Activated naive CD4-positive, alpha-beta T cell treated with anti-CD3 and anti-CD28 coated beads for 36 hours (primary cell): ENCODE measurements at regions of chr3 and their contacts with region 1.

Region 1: DNA sequence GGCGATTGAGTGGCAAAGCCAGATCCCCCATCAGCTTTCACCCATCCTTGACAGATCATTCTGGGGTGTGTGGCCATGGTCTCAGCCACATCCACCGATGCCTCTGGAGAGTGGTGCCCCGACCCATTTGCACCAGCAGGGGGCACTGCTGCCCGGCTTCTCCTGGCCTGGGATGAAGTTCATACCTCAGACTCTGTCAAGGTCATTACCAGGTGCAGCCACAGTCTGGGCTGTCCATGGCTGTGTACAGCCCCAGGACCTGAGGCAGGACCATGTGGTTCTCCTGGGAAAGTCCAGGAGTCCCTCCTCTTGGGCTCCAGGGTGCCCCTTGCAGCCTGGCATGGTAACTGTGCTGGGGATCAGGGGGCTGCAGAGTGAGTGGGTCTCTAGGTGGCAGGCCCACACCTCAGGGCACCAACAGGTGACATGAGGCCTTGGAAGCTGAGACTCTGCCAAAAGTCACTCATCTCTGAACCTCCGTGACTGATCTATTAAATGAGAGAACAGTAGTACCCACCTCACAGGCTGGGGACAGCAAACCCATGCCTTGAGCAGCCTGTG is 67.2 kb downstream of the CACNA2D2 start:
- DNase-seq: peak; percentile 85
- H3K4me3 Mint-ChIP-seq: no peak overlapping the region
- H3K27ac Mint-ChIP-seq: no peak overlapping the region
- H3K4me1 Mint-ChIP-seq: no peaks in the 10 kb centered on the region
- H3K27me3 Mint-ChIP-seq: peaks cover 2% of the 10 kb centered on the region

Region 2: DNA sequence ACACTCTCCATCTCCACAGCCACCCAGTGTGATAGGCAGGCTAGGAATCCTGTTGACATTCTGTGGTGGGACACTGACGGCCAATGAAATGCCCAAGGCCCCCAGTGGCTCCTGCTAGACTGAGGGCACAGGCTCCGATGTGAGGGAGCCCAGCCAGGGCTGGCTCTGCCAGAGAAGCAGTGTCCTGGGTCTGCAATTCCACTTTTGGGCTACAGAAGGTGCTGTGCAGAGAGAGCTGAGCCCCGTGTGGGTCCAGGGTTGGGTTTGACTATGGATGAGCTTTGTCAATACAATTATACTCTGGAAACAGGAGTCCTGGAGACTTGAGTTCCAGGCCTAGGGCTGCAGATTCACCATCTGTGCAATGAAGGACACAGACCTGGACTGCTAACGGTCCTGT is 21.1 kb before region 1 on chr3:
- CTCF ChIA-PET with region 1: no interaction called
- intact Hi-C with region 1: no loop called
- DNase-seq: no peak
- H3K4me3 Mint-ChIP-seq: no peak overlapping the region
- H3K27ac Mint-ChIP-seq: no peak overlapping the region
- H3K4me1 Mint-ChIP-seq: no peaks in the 10 kb centered on the region
- H3K27me3 Mint-ChIP-seq: no peaks in the 10 kb centered on the region

Region 3: GRCh38 chr3:50474717-50475116 is 38.5 kb after region 1 on chr3:
- CTCF ChIA-PET with region 1: no interaction called
- intact Hi-C with region 1: no loop called
- DNase-seq: no peak
- H3K4me3 Mint-ChIP-seq: no peak overlapping the region
- H3K27ac Mint-ChIP-seq: no peak overlapping the region
- H3K4me1 Mint-ChIP-seq: no peaks in the 10 kb centered on the region
- H3K27me3 Mint-ChIP-seq: no peaks in the 10 kb centered on the region

Region 4: DNA sequence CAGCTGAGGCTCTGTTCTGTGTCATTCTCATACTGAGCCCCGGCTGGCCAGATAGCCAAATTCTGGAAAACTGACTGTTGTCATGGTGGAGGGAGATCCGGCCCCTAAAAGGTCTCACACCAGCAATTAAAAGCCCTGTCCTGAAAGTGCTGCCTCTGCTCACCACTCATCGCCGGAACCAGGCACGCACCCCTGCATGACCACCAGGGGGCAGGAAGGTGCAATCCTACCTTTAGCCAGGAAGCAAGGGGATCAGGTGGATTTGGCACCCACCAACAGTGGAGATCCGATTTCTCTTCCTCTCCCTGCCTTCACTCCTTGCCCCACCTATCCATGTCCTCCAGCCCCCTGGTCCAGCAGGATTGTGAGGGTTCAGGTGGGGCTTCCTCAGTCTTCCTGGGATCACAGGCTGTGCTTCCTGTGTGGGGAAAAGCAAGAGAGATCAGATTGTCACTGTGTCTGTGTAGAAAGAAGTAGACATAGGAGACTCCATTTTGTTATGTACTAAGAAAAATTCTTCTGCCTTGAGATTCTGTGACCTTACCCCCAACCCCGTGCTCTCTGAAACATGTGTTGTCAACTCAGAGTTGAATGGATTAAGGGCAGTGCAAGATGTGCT is 83.4 kb after region 1 on chr3:
- CTCF ChIA-PET with region 1: no interaction called
- intact Hi-C with region 1: loop called (anchors 1 kb)
- DNase-seq: peak; percentile 86
- H3K4me3 Mint-ChIP-seq: no peak overlapping the region
- H3K27ac Mint-ChIP-seq: no peak overlapping the region
- H3K4me1 Mint-ChIP-seq: peaks cover 7% of the 10 kb centered on the region
- H3K27me3 Mint-ChIP-seq: no peaks in the 10 kb centered on the region

Region 5: GRCh38 chr3:50542177-50543034 is 106.2 kb after region 1 on chr3:
- CTCF ChIA-PET with region 1: interaction called, 25 read pairs
- intact Hi-C with region 1: loop called (anchors 1 kb)
- DNase-seq: peak; percentile 71
- H3K4me3 Mint-ChIP-seq: no peak overlapping the region
- H3K27ac Mint-ChIP-seq: no peak overlapping the region
- H3K4me1 Mint-ChIP-seq: no peaks in the 10 kb centered on the region
- H3K27me3 Mint-ChIP-seq: no peaks in the 10 kb centered on the region

Region 6: GRCh38 chr3:50550079-50550741 is 114.0 kb after region 1 on chr3:
- CTCF ChIA-PET with region 1: interaction called, 3 read pairs
- intact Hi-C with region 1: loop called (anchors 1 kb)
- DNase-seq: peak; percentile 83
- H3K4me3 Mint-ChIP-seq: no peak overlapping the region
- H3K27ac Mint-ChIP-seq: no peak overlapping the region
- H3K4me1 Mint-ChIP-seq: no peaks in the 10 kb centered on the region
- H3K27me3 Mint-ChIP-seq: no peaks in the 10 kb centered on the region

Region 7: GRCh38 chr3:51024765-51025632 is 588.8 kb after region 1 on chr3:
- CTCF ChIA-PET with region 1: no interaction called
- intact Hi-C with region 1: no loop called
- DNase-seq: peak; percentile 87
- H3K4me3 Mint-ChIP-seq: peak overlapping the region; percentile 8
- H3K27ac Mint-ChIP-seq: peak overlapping the region; percentile 83
- H3K4me1 Mint-ChIP-seq: peaks cover 39% of the 10 kb centered on the region
- H3K27me3 Mint-ChIP-seq: no peaks in the 10 kb centered on the region